ENCODE measurements at regions of chr11 and their contacts with region 1.

Region 1: DNA sequence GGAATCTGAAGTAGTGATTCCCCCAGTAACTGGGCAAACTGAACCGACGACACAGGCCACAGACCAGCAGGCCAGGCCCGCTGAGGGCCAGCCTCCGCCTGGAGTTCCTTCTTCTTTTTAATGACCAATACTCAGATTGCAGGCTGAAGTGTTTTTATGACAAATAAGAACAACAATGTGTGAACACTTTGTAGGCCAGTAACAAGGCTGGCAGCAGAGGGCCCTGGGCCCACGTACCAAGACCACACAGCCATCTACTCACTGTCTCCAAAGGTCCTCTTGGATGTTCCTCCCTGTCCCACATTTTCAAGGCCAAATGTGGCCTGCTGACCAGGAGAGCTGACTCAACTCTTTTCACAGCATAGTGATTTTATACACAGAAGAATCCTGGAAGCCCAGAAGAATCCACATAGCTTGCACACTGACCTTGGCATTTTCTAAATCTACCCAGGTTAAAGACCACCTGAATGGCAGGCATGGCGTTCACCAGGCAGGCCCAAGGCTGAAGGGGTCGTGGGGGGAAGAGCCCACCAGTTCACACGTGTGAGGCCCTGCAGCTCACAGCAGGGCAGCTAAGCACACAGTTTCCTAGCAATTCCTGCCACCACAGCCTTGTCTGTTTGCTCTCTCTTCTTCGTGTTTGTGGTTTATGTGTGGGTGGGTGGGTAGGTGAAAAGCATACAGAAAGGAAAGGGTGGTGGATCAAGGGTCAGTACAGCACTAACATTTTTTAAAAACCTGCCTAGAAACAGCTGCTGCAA is 13.3 kb downstream of the SMCO4 start:
- DNase-seq: peak; percentile 74
- ATAC-seq: peak; percentile 84
- H3K4me3 ChIP-seq: peak overlapping the region; percentile 12 to 55 (median 40); a peak in 5 of 6 replicates
- H3K27ac ChIP-seq: peak overlapping the region; percentile 75
- H3K4me1 ChIP-seq: peaks cover 69% of the 10 kb centered on the region
- H3K27me3 ChIP-seq: no peaks in the 10 kb centered on the region
- CTCF ChIP-seq: no peak
- EP300 ChIP-seq: peak; percentile 55 to 59; a peak in 2 of 4 replicates
- POLR2A ChIP-seq: 0 out of 4 replicates have a peak, but pooled peaks of 1 of the 2 experiments have one; percentile 31
- RAD21 ChIP-seq: no peak

Region 2: GRCh38 chr11:93396316-93396715 is 133.6 kb before region 1 on chr11:
- CTCF ChIA-PET with region 1: no interaction called
- POLR2A ChIA-PET with region 1: no interaction called
- in situ Hi-C with region 1: no loop called
- intact Hi-C with region 1: no loop called
- DNase-seq: no peak
- ATAC-seq: no peak
- H3K4me3 ChIP-seq: no peak overlapping the region
- H3K27ac ChIP-seq: no peak overlapping the region
- H3K4me1 ChIP-seq: no peaks in the 10 kb centered on the region
- H3K27me3 ChIP-seq: peaks cover 1 to 4% of the 10 kb centered on the region in 2 experiments; a peak in 1 of 5 replicates
- CTCF ChIP-seq: no peak
- EP300 ChIP-seq: no peak
- POLR2A ChIP-seq: no peak
- RAD21 ChIP-seq: no peak

Region 3: GRCh38 chr11:93444617-93445073 is 85.2 kb before region 1 on chr11:
- CTCF ChIA-PET with region 1: no interaction called
- POLR2A ChIA-PET with region 1: no interaction called
- in situ Hi-C with region 1: no loop called
- intact Hi-C with region 1: loop called (anchors 5 kb)
- DNase-seq: peak; percentile 60
- ATAC-seq: peak; percentile 38; the same call in 2 of the 3 replicates
- H3K4me3 ChIP-seq: no peak overlapping the region
- H3K27ac ChIP-seq: no peak overlapping the region
- H3K4me1 ChIP-seq: peaks cover 9% of the 10 kb centered on the region; the same call in 1 of the 2 replicates
- H3K27me3 ChIP-seq: no peaks in the 10 kb centered on the region; a peak in 1 of 5 replicates
- CTCF ChIP-seq: no peak
- EP300 ChIP-seq: no peak
- POLR2A ChIP-seq: no peak
- RAD21 ChIP-seq: no peak

Region 4: DNA sequence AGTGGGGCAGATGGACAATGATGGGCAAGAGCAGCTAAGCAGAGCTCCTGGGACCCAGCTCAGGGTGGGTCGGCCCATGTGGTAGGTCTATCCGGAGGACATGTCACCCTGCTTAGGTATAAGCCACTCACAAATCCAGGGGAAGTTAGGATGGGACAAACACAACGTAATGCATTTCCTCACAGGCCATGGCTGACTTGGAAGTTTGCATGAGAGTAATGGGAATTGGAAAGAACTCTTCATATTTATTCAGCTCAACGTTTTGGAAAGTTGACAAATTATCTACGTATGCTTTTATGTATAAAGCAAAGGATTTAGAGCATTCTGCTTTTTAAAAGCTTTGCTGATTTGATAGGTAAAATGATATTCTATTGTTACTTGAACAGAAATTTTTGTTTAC is 61.6 kb before region 1 on chr11:
- CTCF ChIA-PET with region 1: no interaction called
- POLR2A ChIA-PET with region 1: no interaction called
- in situ Hi-C with region 1: no loop called
- intact Hi-C with region 1: no loop called
- DNase-seq: no peak
- ATAC-seq: no peak
- H3K4me3 ChIP-seq: no peak overlapping the region
- H3K27ac ChIP-seq: no peak overlapping the region
- H3K4me1 ChIP-seq: no peaks in the 10 kb centered on the region
- H3K27me3 ChIP-seq: no peaks in the 10 kb centered on the region
- CTCF ChIP-seq: no peak
- EP300 ChIP-seq: no peak
- POLR2A ChIP-seq: no peak
- RAD21 ChIP-seq: no peak

Region 5: GRCh38 chr11:93487032-93487483 is 42.8 kb before region 1 on chr11:
- CTCF ChIA-PET with region 1: no interaction called
- POLR2A ChIA-PET with region 1: interaction called, 22 read pairs
- in situ Hi-C with region 1: loop called (anchors 5 kb)
- intact Hi-C with region 1: loop called (anchors 1 kb)
- DNase-seq: peak; percentile 97
- ATAC-seq: peak; percentile 99
- H3K4me3 ChIP-seq: peak overlapping the region in 1 of 3 experiments; percentile 15; a peak in 1 of 6 replicates
- H3K27ac ChIP-seq: peak overlapping the region; percentile 25
- H3K4me1 ChIP-seq: peaks cover 65% of the 10 kb centered on the region
- H3K27me3 ChIP-seq: no peaks in the 10 kb centered on the region
- CTCF ChIP-seq: peak; percentile 27; the same call in 1 of the 2 replicates
- EP300 ChIP-seq: peak; percentile 90 to 95; a peak in 3 of 4 replicates
- POLR2A ChIP-seq: no peak
- RAD21 ChIP-seq: peak; percentile 62; the same call in 1 of the 2 replicates

Region 6: GRCh38 chr11:93494357-93494756 is 35.5 kb before region 1 on chr11:
- CTCF ChIA-PET with region 1: no interaction called
- POLR2A ChIA-PET with region 1: interaction called, 22 read pairs
- in situ Hi-C with region 1: loop called (anchors 5 kb)
- intact Hi-C with region 1: loop called (anchors 1 kb)
- DNase-seq: no peak
- ATAC-seq: no peak
- H3K4me3 ChIP-seq: no peak overlapping the region
- H3K27ac ChIP-seq: no peak overlapping the region
- H3K4me1 ChIP-seq: peaks cover 58% of the 10 kb centered on the region
- H3K27me3 ChIP-seq: no peaks in the 10 kb centered on the region
- CTCF ChIP-seq: no peak
- EP300 ChIP-seq: no peak
- POLR2A ChIP-seq: no peak
- RAD21 ChIP-seq: no peak

Region 7: GRCh38 chr11:93504110-93505095 is 25.5 kb before region 1 on chr11:
- CTCF ChIA-PET with region 1: no interaction called
- POLR2A ChIA-PET with region 1: no interaction called
- in situ Hi-C with region 1: no loop called
- intact Hi-C with region 1: no loop called
- DNase-seq: no peak
- ATAC-seq: no peak
- H3K4me3 ChIP-seq: no peak overlapping the region
- H3K27ac ChIP-seq: no peak overlapping the region
- H3K4me1 ChIP-seq: peaks cover 22% of the 10 kb centered on the region
- H3K27me3 ChIP-seq: no peaks in the 10 kb centered on the region
- CTCF ChIP-seq: no peak
- EP300 ChIP-seq: no peak
- POLR2A ChIP-seq: no peak
- RAD21 ChIP-seq: no peak

Region 8: GRCh38 chr11:93662177-93662575 is 132.3 kb after region 1 on chr11:
- CTCF ChIA-PET with region 1: no interaction called
- POLR2A ChIA-PET with region 1: no interaction called
- in situ Hi-C with region 1: no loop called
- intact Hi-C with region 1: loop called (anchors 5 kb)
- DNase-seq: no peak
- ATAC-seq: no peak
- H3K4me3 ChIP-seq: peak overlapping the region; percentile 71 to 88 (median 83)
- H3K27ac ChIP-seq: peak overlapping the region; percentile 79
- H3K4me1 ChIP-seq: peaks cover 28% of the 10 kb centered on the region
- H3K27me3 ChIP-seq: no peaks in the 10 kb centered on the region; a peak in 1 of 5 replicates
- CTCF ChIP-seq: no peak
- EP300 ChIP-seq: no peak
- POLR2A ChIP-seq: no peak
- RAD21 ChIP-seq: no peak